Naive thymus-derived CD4-positive, alpha-beta T cell (primary cell): ENCODE measurements at regions of chr11 and their contacts with region 1.

Region 1: GRCh38 chr11:95067039-95067840 is 521 bp downstream of the SRSF8 start:
- DNase-seq: peak; percentile 62 to 79 (median 74)
- ATAC-seq: peak; percentile 81
- H3K4me3 ChIP-seq: peak overlapping the region; percentile 87
- H3K4me3 Mint-ChIP-seq: peak overlapping the region; percentile 93 to 100 (median 96)
- H3K27ac ChIP-seq: peak overlapping the region; percentile 96
- H3K27ac Mint-ChIP-seq: peak overlapping the region; percentile 93 to 100 (median 97)
- H3K4me1 ChIP-seq: peaks cover 16 to 17% of the 10 kb centered on the region in 2 donors
- H3K4me1 Mint-ChIP-seq: peaks cover 17 to 38% (median 30%) of the 10 kb centered on the region in 7 donors
- H3K27me3 ChIP-seq: no peaks in the 10 kb centered on the region
- H3K27me3 Mint-ChIP-seq: peaks cover 0 to 23% (median 0%) of the 10 kb centered on the region in 5 donors

Region 2: DNA sequence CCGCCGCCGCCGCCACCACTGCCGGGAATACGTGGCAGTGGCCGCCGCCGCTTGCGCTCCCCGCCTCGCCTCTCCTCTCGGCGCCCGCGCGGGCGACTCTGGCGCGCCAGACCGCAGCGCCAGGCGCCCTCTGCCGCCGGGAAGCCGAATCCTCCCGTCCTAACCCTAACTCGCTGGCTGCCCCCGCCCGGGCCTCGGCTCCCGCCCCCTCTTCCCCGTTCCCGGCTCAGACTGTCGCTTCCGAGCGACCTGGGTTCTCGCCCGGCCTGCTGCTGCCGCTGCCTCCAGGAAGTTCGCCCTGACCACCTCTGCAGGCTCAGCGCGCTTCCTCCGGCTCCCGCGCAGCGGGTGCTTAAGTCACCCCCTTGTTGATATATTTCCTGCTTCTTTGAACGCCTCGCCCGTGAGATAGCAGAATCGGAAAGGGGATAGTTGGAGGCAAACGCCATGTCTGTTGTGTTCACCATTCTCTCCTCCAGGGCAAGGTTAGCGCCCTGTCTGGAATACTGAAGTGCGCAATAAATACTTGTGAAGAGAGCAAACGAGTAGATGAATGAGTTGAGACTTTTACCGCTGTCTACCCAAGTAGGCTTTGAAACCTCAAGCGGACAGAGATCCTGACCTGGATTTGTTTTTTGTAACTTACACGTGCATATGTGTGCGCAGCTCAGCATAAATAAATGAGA is 1523.8 kb before region 1 on chr11 and contains the start of gene SMCO4:
- CTCF ChIA-PET with region 1: no interaction called
- POLR2A ChIA-PET with region 1: no interaction called
- intact Hi-C with region 1: loop called in 1 of 2 experiments (anchors 5 kb)
- DNase-seq: peak; percentile 17 to 82 (median 40)
- ATAC-seq: peak; percentile 83
- H3K4me3 ChIP-seq: peak within 1 kb of the TSS; percentile 48
- H3K4me3 Mint-ChIP-seq: peak within 1 kb of the TSS; percentile 88 to 95 (median 92)
- H3K27ac ChIP-seq: peak within 1 kb of the TSS; percentile 33
- H3K27ac Mint-ChIP-seq: peak within 1 kb of the TSS in 7 of 9 donors; percentile 9 to 87 (median 52)
- H3K4me1 ChIP-seq: no peaks in the 10 kb centered on the region
- H3K4me1 Mint-ChIP-seq: peaks cover 6 to 39% (median 21%) of the 10 kb centered on the region in 7 donors
- H3K27me3 ChIP-seq: no peaks in the 10 kb centered on the region
- H3K27me3 Mint-ChIP-seq: peaks cover 0 to 16% (median 4%) of the 10 kb centered on the region in 5 donors
- total RNA-seq, gene SMCO4: 2.9 to 34.7 (median 5.9) TPM

Region 3: DNA sequence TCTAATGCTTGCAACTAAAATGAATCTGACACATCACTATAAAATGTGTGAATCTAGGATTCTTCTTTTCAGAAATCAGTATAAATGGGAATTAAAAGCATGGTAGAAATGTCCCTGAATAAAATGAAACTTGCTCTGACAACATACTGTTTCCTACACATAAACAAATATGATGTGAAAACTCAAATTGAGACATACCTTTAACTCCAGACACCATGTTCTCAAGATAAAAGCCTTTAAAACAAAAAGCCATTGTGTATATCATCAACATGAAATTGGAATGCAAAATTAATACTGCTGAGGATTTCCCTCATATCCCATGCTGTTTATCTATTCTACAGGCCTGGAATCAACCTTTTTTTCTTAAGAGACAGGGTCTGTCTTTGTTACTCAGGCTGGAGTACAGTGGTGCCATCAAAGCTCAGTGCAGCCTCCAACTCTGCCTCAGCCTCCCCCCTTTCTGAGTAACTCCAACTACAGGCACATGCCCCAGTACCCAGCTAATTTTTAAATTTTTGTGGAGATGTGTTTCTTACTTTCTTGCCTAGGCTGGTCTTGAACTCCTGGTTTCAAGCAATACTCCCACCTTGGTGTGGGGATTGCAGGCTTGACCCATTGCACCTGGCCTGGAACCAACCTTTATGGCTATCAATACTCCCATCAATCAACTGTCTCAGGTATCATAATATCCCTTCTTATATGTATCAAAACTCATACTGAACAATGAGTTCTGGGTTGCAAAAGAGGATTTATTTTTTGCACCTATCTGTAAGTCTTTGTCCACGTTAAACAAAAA is 1332.6 kb before region 1 on chr11:
- CTCF ChIA-PET with region 1: no interaction called
- POLR2A ChIA-PET with region 1: no interaction called
- intact Hi-C with region 1: no loop called
- DNase-seq: no peak
- ATAC-seq: no peak
- H3K4me3 ChIP-seq: no peak overlapping the region
- H3K4me3 Mint-ChIP-seq: peak overlapping the region in 5 of 10 donors; percentile 10 to 29 (median 17)
- H3K27ac ChIP-seq: no peak overlapping the region
- H3K27ac Mint-ChIP-seq: peak overlapping the region in 7 of 9 donors; percentile 31 to 81 (median 58)
- H3K4me1 ChIP-seq: peaks cover 28 to 41% of the 10 kb centered on the region in 2 donors
- H3K4me1 Mint-ChIP-seq: peaks cover 33 to 70% (median 60%) of the 10 kb centered on the region in 7 donors
- H3K27me3 ChIP-seq: no peaks in the 10 kb centered on the region
- H3K27me3 Mint-ChIP-seq: no peaks in the 10 kb centered on the region

Region 4: GRCh38 chr11:94224078-94224477 is 843.2 kb before region 1 on chr11:
- CTCF ChIA-PET with region 1: no interaction called
- POLR2A ChIA-PET with region 1: no interaction called
- intact Hi-C with region 1: no loop called
- DNase-seq: no peak
- ATAC-seq: no peak
- H3K4me3 ChIP-seq: no peak overlapping the region
- H3K4me3 Mint-ChIP-seq: no peak overlapping the region
- H3K27ac ChIP-seq: no peak overlapping the region
- H3K27ac Mint-ChIP-seq: no peak overlapping the region
- H3K4me1 ChIP-seq: no peaks in the 10 kb centered on the region
- H3K4me1 Mint-ChIP-seq: no peaks in the 10 kb centered on the region
- H3K27me3 ChIP-seq: no peaks in the 10 kb centered on the region
- H3K27me3 Mint-ChIP-seq: peaks cover 0 to 8% (median 0%) of the 10 kb centered on the region in 5 donors

Region 5: GRCh38 chr11:94493281-94494125 is 573.7 kb before region 1 on chr11 and contains the starts of genes ANKRD49 and MRE11:
- CTCF ChIA-PET with region 1: no interaction called
- POLR2A ChIA-PET with region 1: interaction called, 4 read pairs
- intact Hi-C with region 1: loop called (anchors 5 kb)
- DNase-seq: peak; percentile 92 to 98 (median 97)
- ATAC-seq: peak; percentile 100
- H3K4me3 ChIP-seq: peak within 1 kb of the TSS; percentile 94
- H3K4me3 Mint-ChIP-seq: peak within 1 kb of the TSS; percentile 92 to 99 (median 96)
- H3K27ac ChIP-seq: peak within 1 kb of the TSS; percentile 93
- H3K27ac Mint-ChIP-seq: peak within 1 kb of the TSS; percentile 91 to 99 (median 97)
- H3K4me1 ChIP-seq: peaks cover 18 to 28% of the 10 kb centered on the region in 2 donors
- H3K4me1 Mint-ChIP-seq: peaks cover 31 to 64% (median 42%) of the 10 kb centered on the region in 7 donors
- H3K27me3 ChIP-seq: no peaks in the 10 kb centered on the region
- H3K27me3 Mint-ChIP-seq: no peaks in the 10 kb centered on the region
- total RNA-seq, gene ANKRD49: 25.6 to 64.4 (median 44.5) TPM
- total RNA-seq, gene MRE11: 19.0 to 45.5 (median 40.1) TPM

Region 6: GRCh38 chr11:94933223-94934130 is 133.8 kb before region 1 on chr11:
- CTCF ChIA-PET with region 1: no interaction called
- POLR2A ChIA-PET with region 1: interaction called, 10 read pairs
- intact Hi-C with region 1: no loop called
- DNase-seq: no peak
- ATAC-seq: no peak
- H3K4me3 ChIP-seq: no peak overlapping the region
- H3K4me3 Mint-ChIP-seq: peak overlapping the region in 9 of 10 donors; percentile 10 to 90 (median 76)
- H3K27ac ChIP-seq: no peak overlapping the region
- H3K27ac Mint-ChIP-seq: peak overlapping the region in 4 of 9 donors; percentile 52 to 89 (median 68)
- H3K4me1 ChIP-seq: peaks cover 0 to 33% of the 10 kb centered on the region in 2 donors
- H3K4me1 Mint-ChIP-seq: peaks cover 26 to 75% (median 66%) of the 10 kb centered on the region in 7 donors
- H3K27me3 ChIP-seq: no peaks in the 10 kb centered on the region
- H3K27me3 Mint-ChIP-seq: peaks cover 0 to 2% (median 0%) of the 10 kb centered on the region in 5 donors

Region 7: GRCh38 chr11:95089620-95090542 is 22.6 kb after region 1 on chr11 and contains the start of gene ENDOD1:
- CTCF ChIA-PET with region 1: interaction called, 62 read pairs
- POLR2A ChIA-PET with region 1: interaction called, 285 read pairs
- intact Hi-C with region 1: loop called (anchors 1 kb)
- DNase-seq: peak; percentile 81 to 89 (median 87)
- ATAC-seq: peak; percentile 98
- H3K4me3 ChIP-seq: peak within 1 kb of the TSS; percentile 79
- H3K4me3 Mint-ChIP-seq: peak within 1 kb of the TSS; percentile 86 to 95 (median 92)
- H3K27ac ChIP-seq: peak within 1 kb of the TSS; percentile 87
- H3K27ac Mint-ChIP-seq: peak within 1 kb of the TSS; percentile 96 to 99 (median 98)
- H3K4me1 ChIP-seq: peaks cover 16 to 31% of the 10 kb centered on the region in 2 donors
- H3K4me1 Mint-ChIP-seq: peaks cover 24 to 61% (median 49%) of the 10 kb centered on the region in 7 donors
- H3K27me3 ChIP-seq: no peaks in the 10 kb centered on the region
- H3K27me3 Mint-ChIP-seq: no peaks in the 10 kb centered on the region
- total RNA-seq, gene ENDOD1: 4.7 to 23.2 (median 8.6) TPM

Region 8: GRCh38 chr11:95301474-95301873 is 234.2 kb after region 1 on chr11:
- CTCF ChIA-PET with region 1: no interaction called
- POLR2A ChIA-PET with region 1: no interaction called
- intact Hi-C with region 1: no loop called
- DNase-seq: no peak
- ATAC-seq: no peak
- H3K4me3 ChIP-seq: no peak overlapping the region
- H3K4me3 Mint-ChIP-seq: no peak overlapping the region
- H3K27ac ChIP-seq: no peak overlapping the region
- H3K27ac Mint-ChIP-seq: peak overlapping the region in 1 of 9 donors; percentile 60
- H3K4me1 ChIP-seq: peaks cover 0 to 27% of the 10 kb centered on the region in 2 donors
- H3K4me1 Mint-ChIP-seq: peaks cover 23 to 41% (median 31%) of the 10 kb centered on the region in 7 donors
- H3K27me3 ChIP-seq: no peaks in the 10 kb centered on the region
- H3K27me3 Mint-ChIP-seq: no peaks in the 10 kb centered on the region

Region 9: GRCh38 chr11:95688580-95689189 is 621.4 kb after region 1 on chr11:
- CTCF ChIA-PET with region 1: interaction called, 3 read pairs
- POLR2A ChIA-PET with region 1: interaction called, 10 read pairs
- intact Hi-C with region 1: no loop called
- DNase-seq: peak in 7 of 9 donors; percentile 48 to 84 (median 70)
- ATAC-seq: peak; percentile 79
- H3K4me3 ChIP-seq: no peak overlapping the region
- H3K4me3 Mint-ChIP-seq: no peak overlapping the region
- H3K27ac ChIP-seq: peak overlapping the region; percentile 73
- H3K27ac Mint-ChIP-seq: no peak overlapping the region
- H3K4me1 ChIP-seq: peaks cover 25 to 68% of the 10 kb centered on the region in 2 donors
- H3K4me1 Mint-ChIP-seq: peaks cover 8 to 44% (median 35%) of the 10 kb centered on the region in 7 donors
- H3K27me3 ChIP-seq: no peaks in the 10 kb centered on the region
- H3K27me3 Mint-ChIP-seq: no peaks in the 10 kb centered on the region

Region 10: DNA sequence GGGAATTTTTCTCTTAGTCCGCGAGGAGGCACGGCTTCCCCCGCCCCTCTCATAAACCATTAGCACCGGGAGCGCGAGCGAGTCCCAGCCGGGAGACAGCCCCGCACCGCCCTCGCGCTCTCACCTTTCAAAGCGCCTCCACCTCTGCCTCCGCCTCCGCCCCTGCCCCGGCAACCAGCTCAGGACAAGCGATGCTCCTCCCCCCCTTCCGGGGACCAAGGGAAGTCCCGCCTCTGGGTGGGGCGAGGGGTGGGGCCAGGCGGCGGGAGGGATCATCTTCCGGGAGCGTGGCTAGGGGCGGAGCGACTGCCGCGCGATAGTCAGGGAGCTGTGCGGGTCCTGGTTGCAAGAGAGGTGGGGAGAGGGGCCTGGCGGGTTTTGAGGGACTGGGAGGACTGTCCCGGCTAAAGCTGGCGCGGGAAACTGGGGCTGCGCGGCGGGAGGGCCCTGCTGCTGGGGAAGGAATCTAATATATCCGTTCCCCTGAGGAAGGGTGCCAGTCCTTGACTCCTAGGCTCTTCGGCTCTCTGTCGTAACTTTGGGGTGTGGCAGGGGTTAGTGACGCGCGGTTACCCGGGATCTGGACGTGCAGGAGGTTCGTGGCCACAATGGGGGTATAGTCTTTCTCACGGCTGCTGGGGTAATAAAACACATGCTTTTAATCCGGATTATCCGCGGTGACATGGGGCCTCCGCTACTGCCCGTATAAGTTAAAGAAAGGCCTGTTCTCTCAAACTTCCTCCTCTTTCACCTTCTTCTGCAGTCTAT is 1322.7 kb after region 1 on chr11 and contains the starts of genes CCDC82 and JRKL:
- CTCF ChIA-PET with region 1: no interaction called
- POLR2A ChIA-PET with region 1: interaction called, 6 read pairs
- intact Hi-C with region 1: loop called (anchors 1 to 5 kb)
- DNase-seq: peak; percentile 96 to 99 (median 98)
- ATAC-seq: peak; percentile 99
- H3K4me3 ChIP-seq: peak within 1 kb of the TSS; percentile 66
- H3K4me3 Mint-ChIP-seq: peak within 1 kb of the TSS; percentile 84 to 99 (median 94)
- H3K27ac ChIP-seq: peak within 1 kb of the TSS; percentile 86
- H3K27ac Mint-ChIP-seq: peak within 1 kb of the TSS; percentile 71 to 97 (median 91)
- H3K4me1 ChIP-seq: peaks cover 17 to 18% of the 10 kb centered on the region in 2 donors
- H3K4me1 Mint-ChIP-seq: peaks cover 32 to 66% (median 60%) of the 10 kb centered on the region in 7 donors
- H3K27me3 ChIP-seq: no peaks in the 10 kb centered on the region
- H3K27me3 Mint-ChIP-seq: no peaks in the 10 kb centered on the region
- total RNA-seq, gene CCDC82: 21.9 to 46.2 (median 32.0) TPM
- total RNA-seq, gene JRKL: 5.4 to 17.3 (median 10.1) TPM